Activated CD4-positive, alpha-beta memory T cell treated with anti-CD3 and anti-CD28 coated beads, Interleukin-2, amount 10 ng/mL, durations not matched to agents 7 days and 5 days (primary cell): ENCODE measurements at regions of chr17 and their contacts with region 1.

Region 1: GRCh38 chr17:80892019-80892855 is 99.4 kb upstream of the CHMP6 start:
- DNase-seq: peak; percentile 95
- H3K4me3 Mint-ChIP-seq: peak overlapping the region; percentile 94
- H3K27ac Mint-ChIP-seq: peak overlapping the region; percentile 100
- H3K4me1 Mint-ChIP-seq: peaks cover 85% of the 10 kb centered on the region
- H3K27me3 Mint-ChIP-seq: no peaks in the 10 kb centered on the region

Region 2: DNA sequence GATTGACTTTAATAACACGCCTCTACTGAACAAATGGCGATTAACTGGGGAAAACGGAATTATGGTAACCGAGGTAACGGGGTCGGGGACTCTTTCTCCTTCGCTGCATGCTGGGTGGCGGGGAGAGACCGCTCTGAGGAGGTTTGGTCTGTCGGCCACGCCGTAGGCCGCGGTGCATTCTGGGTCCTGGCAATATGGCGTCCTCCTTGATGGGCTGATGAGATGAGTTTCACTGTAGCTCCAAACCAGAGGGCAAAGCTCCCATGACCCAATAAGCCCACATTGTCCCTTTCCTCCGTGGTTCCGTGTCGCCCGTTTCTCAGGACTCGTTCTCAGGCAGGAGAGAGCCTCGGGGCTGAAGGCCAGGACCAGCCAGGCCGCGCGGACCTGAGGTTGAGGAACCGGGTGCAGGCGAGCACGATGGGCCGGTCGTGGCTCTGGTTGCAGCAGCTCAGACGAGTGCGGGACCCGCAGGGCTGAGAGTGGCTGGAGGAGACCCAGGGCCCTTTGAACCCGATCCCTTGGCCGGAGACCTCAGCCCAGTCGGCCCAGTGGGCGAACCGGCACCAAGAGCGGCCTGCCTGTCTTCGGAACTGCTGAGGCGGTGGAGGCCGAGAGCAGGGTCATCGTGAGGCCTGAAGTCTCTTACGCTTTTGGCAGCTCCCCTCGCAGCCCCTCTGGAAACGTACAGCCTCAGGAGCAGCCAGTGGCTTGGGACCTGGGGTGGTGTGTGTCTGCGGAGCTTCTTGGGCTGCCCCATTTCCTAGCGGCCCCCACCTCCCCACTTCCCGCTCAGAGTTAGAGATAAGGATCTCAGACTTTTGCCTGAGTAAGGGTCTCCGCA is 347.4 kb before region 1 on chr17 and contains the start of gene RPTOR:
- CTCF ChIA-PET with region 1: no interaction called
- POLR2A ChIA-PET with region 1: interaction called, 14 read pairs
- DNase-seq: peak; percentile 92
- H3K4me3 Mint-ChIP-seq: peak within 1 kb of the TSS; percentile 87
- H3K27ac Mint-ChIP-seq: peak within 1 kb of the TSS; percentile 78
- H3K4me1 Mint-ChIP-seq: peaks cover 33% of the 10 kb centered on the region
- H3K27me3 Mint-ChIP-seq: peaks cover 8% of the 10 kb centered on the region
- total RNA-seq, gene RPTOR: 88.9 to 91.8 TPM

Region 3: GRCh38 chr17:80780381-80781198 is 111.6 kb before region 1 on chr17:
- CTCF ChIA-PET with region 1: no interaction called
- POLR2A ChIA-PET with region 1: interaction called, 37 read pairs
- DNase-seq: peak; percentile 75
- H3K4me3 Mint-ChIP-seq: peak overlapping the region; percentile 54
- H3K27ac Mint-ChIP-seq: peak overlapping the region; percentile 95
- H3K4me1 Mint-ChIP-seq: peaks cover 83% of the 10 kb centered on the region
- H3K27me3 Mint-ChIP-seq: no peaks in the 10 kb centered on the region

Region 4: DNA sequence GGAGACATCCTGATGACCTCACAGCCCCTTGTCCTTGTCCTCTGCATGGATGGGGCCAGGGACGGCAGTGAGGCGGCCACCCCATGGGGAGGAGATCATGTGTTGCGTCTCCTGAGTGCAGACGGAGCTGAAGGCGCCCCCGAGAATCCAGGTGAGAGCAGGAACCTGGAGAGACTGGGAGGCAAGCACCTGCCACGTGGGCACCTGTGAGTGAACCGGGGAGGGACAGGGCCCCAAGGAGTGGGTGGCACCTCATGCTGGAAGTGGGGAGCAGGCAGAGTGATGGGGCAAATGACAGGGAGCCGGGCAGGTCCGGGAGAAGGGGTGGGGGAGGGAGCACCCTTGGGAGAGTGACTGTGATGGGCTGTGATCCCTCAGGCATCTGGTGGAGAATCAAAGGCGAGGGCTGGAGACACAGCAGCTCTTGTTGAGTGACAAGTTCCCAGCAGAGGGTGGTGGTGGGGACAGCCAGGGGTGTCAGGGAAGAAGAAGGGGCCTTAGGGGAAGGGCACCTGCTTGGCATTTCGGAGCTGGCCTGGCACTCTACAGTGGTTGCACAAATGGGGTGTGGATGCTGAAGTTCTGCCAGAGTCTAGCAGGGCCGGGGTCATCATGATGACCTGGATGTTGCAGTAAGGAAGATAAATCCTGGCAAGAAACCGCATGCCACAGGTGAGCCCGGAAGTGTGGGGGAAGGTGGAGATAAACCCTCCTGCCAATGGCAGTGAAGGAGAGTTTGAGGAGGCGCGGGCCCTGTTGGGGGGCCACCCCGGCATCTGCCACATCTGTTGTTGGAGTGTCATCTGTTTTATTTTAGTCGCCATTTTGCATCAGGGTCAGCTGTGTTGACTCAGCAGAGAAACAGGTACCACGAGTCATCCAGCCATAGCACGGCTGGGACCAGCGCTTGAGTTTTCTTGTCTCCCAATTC is 74.7 kb before region 1 on chr17:
- CTCF ChIA-PET with region 1: interaction called, 11 read pairs
- POLR2A ChIA-PET with region 1: interaction called, 12 read pairs
- DNase-seq: no peak
- H3K4me3 Mint-ChIP-seq: no peak overlapping the region
- H3K27ac Mint-ChIP-seq: peak overlapping the region; percentile 87
- H3K4me1 Mint-ChIP-seq: peaks cover 86% of the 10 kb centered on the region
- H3K27me3 Mint-ChIP-seq: no peaks in the 10 kb centered on the region

Region 5: GRCh38 chr17:80855948-80856862 is 36.0 kb before region 1 on chr17:
- CTCF ChIA-PET with region 1: interaction called, 3 read pairs
- POLR2A ChIA-PET with region 1: interaction called, 135 read pairs
- DNase-seq: peak; percentile 94
- H3K4me3 Mint-ChIP-seq: peak overlapping the region; percentile 26
- H3K27ac Mint-ChIP-seq: peak overlapping the region; percentile 98
- H3K4me1 Mint-ChIP-seq: peaks cover 91% of the 10 kb centered on the region
- H3K27me3 Mint-ChIP-seq: no peaks in the 10 kb centered on the region

Region 6: GRCh38 chr17:80927791-80928216 is 35.6 kb after region 1 on chr17:
- CTCF ChIA-PET with region 1: no interaction called
- POLR2A ChIA-PET with region 1: no interaction called
- DNase-seq: no peak
- H3K4me3 Mint-ChIP-seq: no peak overlapping the region
- H3K27ac Mint-ChIP-seq: no peak overlapping the region
- H3K4me1 Mint-ChIP-seq: no peaks in the 10 kb centered on the region
- H3K27me3 Mint-ChIP-seq: no peaks in the 10 kb centered on the region

Region 7: DNA sequence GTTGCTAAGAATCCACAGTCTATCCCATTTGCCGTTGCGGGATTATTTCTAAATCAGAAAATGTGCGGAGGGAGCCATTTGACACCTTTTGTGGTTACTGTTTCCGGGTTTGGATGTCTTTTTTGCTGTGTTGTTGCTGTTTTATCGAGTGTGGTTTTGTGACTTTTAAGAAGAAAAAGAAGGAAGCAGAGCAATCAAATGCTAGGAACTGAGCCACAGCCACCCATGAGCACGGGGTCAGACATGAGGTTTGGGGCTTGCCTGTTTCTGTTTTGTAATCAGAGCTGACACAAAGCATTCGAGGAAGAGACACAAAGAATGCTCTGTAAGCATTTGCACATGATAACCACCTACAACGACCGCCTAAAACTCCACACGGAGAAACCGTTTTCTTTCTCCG is 46.3 kb after region 1 on chr17:
- CTCF ChIA-PET with region 1: no interaction called
- POLR2A ChIA-PET with region 1: interaction called, 37 read pairs
- DNase-seq: peak; percentile 84
- H3K4me3 Mint-ChIP-seq: peak overlapping the region; percentile 42
- H3K27ac Mint-ChIP-seq: peak overlapping the region; percentile 81
- H3K4me1 Mint-ChIP-seq: peaks cover 53% of the 10 kb centered on the region
- H3K27me3 Mint-ChIP-seq: no peaks in the 10 kb centered on the region